Calu3 (cell line): ENCODE measurements at regions of chr3 and their contacts with region 1.

Region 1: DNA sequence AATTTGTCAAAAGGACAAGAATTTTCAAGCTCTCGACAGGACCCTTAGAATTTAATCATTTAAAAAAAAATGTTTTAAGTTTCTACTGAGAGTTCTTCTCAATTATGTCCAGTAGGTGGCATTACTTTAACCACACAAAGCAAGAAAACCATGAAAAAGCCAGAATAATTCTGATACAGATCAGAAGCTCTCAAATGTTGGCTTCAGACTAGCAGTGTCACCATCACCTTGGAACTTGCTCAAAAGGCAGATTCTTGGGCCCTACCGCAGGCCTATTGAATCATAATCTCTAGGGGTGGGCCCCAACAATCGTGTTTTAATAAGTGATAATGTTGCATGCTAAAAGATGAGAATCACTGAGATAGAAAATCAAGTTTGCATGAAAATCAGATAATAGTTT is 99.5 kb upstream of the KCNMB2 start:
- DNase-seq: no peak
- H3K4me3 Mint-ChIP-seq: no peak overlapping the region
- H3K27ac Mint-ChIP-seq: no peak overlapping the region
- H3K4me1 Mint-ChIP-seq: peaks cover 8% of the 10 kb centered on the region
- H3K27me3 Mint-ChIP-seq: no peaks in the 10 kb centered on the region
- CTCF ChIP-seq: peak; percentile 74

Region 2: GRCh38 chr3:178500631-178501030 is 63.9 kb after region 1 on chr3:
- CTCF ChIA-PET with region 1: no interaction called
- intact Hi-C with region 1: no loop called
- DNase-seq: no peak
- H3K4me3 Mint-ChIP-seq: no peak overlapping the region
- H3K27ac Mint-ChIP-seq: no peak overlapping the region
- H3K4me1 Mint-ChIP-seq: no peaks in the 10 kb centered on the region
- H3K27me3 Mint-ChIP-seq: no peaks in the 10 kb centered on the region
- CTCF ChIP-seq: no peak

Region 3: GRCh38 chr3:178671791-178672190 is 235.0 kb after region 1 on chr3:
- CTCF ChIA-PET with region 1: no interaction called
- intact Hi-C with region 1: loop called (anchors 5 kb)
- DNase-seq: peak; percentile 14
- H3K4me3 Mint-ChIP-seq: no peak overlapping the region
- H3K27ac Mint-ChIP-seq: no peak overlapping the region
- H3K4me1 Mint-ChIP-seq: peaks cover 13% of the 10 kb centered on the region
- H3K27me3 Mint-ChIP-seq: no peaks in the 10 kb centered on the region
- CTCF ChIP-seq: no peak

Region 4: DNA sequence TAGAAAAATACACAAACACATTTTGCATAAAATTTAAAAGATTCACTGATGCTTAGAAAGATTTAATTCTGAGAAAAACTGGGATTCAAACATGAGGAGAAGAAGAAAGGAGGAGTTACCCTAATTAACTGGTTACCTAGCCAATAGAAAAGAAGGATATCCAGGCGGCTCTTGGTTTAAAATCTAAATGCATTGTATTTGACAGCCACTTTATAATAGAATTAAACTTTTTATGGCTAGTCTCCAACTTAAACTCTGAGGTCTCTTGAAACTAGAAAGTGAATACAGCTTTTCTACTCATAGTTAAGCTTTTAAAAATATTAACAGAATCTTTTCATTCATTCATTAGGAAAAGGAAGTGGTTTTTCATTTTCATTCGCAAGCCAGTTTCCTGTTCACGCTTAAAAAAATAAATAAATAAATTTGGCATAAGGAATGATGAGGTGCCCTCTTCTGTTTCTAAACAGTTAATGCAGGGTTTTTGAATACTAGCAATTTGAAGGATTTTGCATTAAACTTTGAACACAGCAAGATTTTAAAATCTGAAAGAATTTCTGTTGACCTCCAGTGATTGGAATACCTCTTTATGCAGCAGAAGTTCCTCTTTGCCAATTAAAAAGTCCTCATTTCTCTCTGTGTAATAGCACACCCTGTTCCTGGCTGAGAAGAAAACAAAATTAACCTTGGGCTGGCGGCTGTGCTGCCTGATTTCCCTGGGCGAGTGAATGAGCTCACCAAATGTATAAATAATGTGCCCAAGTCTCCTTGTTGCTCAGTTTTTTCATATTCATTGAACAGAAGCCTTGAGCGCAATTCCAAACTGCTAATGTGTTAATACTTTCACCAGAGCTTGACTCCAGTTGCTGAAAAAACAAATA is 529.8 kb after region 1 on chr3:
- CTCF ChIA-PET with region 1: interaction called, 12 read pairs
- intact Hi-C with region 1: loop called (anchors 1 kb)
- DNase-seq: no peak
- H3K4me3 Mint-ChIP-seq: no peak overlapping the region
- H3K27ac Mint-ChIP-seq: no peak overlapping the region
- H3K4me1 Mint-ChIP-seq: peaks cover 15% of the 10 kb centered on the region
- H3K27me3 Mint-ChIP-seq: no peaks in the 10 kb centered on the region
- CTCF ChIP-seq: peak; percentile 74